ENCODE measurements at regions of chr7 and their contacts with region 1.

Region 1: GRCh38 chr7:126529833-126530232 is 722.9 kb downstream of the GRM8 start:
- DNase-seq: peak; percentile 2
- ATAC-seq: peak; percentile 68
- H3K4me3 ChIP-seq: no peak overlapping the region
- H3K27ac ChIP-seq: no peak overlapping the region
- H3K4me1 ChIP-seq: no peaks in the 10 kb centered on the region
- H3K27me3 ChIP-seq: no peaks in the 10 kb centered on the region
- CTCF ChIP-seq: no peak

Region 2: GRCh38 chr7:126574276-126575250 is 44.7 kb after region 1 on chr7:
- CTCF ChIA-PET with region 1: no interaction called
- POLR2A ChIA-PET with region 1: no interaction called
- intact Hi-C with region 1: loop called (anchors 2 kb)
- DNase-seq: peak; percentile 41
- ATAC-seq: peak; percentile 92
- H3K4me3 ChIP-seq: no peak overlapping the region
- H3K27ac ChIP-seq: peak overlapping the region; percentile 75
- H3K4me1 ChIP-seq: no peaks in the 10 kb centered on the region
- H3K27me3 ChIP-seq: no peaks in the 10 kb centered on the region
- CTCF ChIP-seq: no peak

Measured in PC-3 (cell line).